HepG2 (cell line): ENCODE measurements at regions of chr20 and their contacts with region 1.

Region 1: GRCh38 chr20:23668477-23668951 is 20.3 kb downstream of the CST4 start:
- DNase-seq: peak; percentile 84
- ATAC-seq: peak; percentile 95
- H3K4me3 ChIP-seq: no peak overlapping the region
- H3K27ac ChIP-seq: no peak overlapping the region
- H3K4me1 ChIP-seq: peaks cover 22% of the 10 kb centered on the region
- H3K27me3 ChIP-seq: no peaks in the 10 kb centered on the region
- CTCF ChIP-seq: peak; percentile 99
- EP300 ChIP-seq: no peak
- POLR2A ChIP-seq: no peak
- RAD21 ChIP-seq: peak; percentile 94

Region 2: GRCh38 chr20:23721962-23722361 is 53.4 kb after region 1 on chr20:
- CTCF ChIA-PET with region 1: interaction called, 13 read pairs
- POLR2A ChIA-PET with region 1: no interaction called
- in situ Hi-C with region 1: no loop called
- intact Hi-C with region 1: loop called (anchors 5 kb)
- DNase-seq: no peak
- ATAC-seq: no peak
- H3K4me3 ChIP-seq: no peak overlapping the region
- H3K27ac ChIP-seq: no peak overlapping the region
- H3K4me1 ChIP-seq: no peaks in the 10 kb centered on the region
- H3K27me3 ChIP-seq: peaks cover 0 to 3% of the 10 kb centered on the region in 2 experiments; a peak in 2 of 5 replicates
- CTCF ChIP-seq: no peak
- EP300 ChIP-seq: no peak
- POLR2A ChIP-seq: no peak
- RAD21 ChIP-seq: no peak

Region 3: DNA sequence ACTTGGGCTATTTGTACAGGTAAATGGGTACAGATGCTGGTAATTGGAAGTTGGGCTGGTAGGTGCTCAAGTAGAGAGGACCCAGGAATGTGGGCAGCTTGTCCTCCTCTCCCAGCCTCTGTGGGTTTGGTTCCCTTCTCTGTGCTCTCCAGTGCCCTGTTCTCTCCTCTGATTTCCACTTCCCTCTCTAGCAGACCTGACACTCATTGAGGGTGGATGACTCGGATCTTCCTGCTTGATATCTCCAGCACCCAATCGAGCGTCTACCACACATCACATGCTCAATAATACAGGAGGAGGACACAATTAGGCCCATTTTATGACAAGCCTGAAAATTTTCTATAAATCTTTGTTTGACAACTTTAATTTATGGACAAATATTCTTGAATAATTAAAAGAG is 58.5 kb after region 1 on chr20:
- CTCF ChIA-PET with region 1: interaction called, 13 read pairs
- POLR2A ChIA-PET with region 1: no interaction called
- in situ Hi-C with region 1: no loop called
- intact Hi-C with region 1: loop called (anchors 5 kb)
- DNase-seq: no peak
- ATAC-seq: no peak
- H3K4me3 ChIP-seq: no peak overlapping the region
- H3K27ac ChIP-seq: no peak overlapping the region
- H3K4me1 ChIP-seq: no peaks in the 10 kb centered on the region
- H3K27me3 ChIP-seq: no peaks in the 10 kb centered on the region
- CTCF ChIP-seq: no peak
- EP300 ChIP-seq: no peak
- POLR2A ChIP-seq: no peak
- RAD21 ChIP-seq: no peak

Region 4: GRCh38 chr20:23782366-23782985 is 114.0 kb after region 1 on chr20:
- CTCF ChIA-PET with region 1: interaction called, 9 read pairs
- POLR2A ChIA-PET with region 1: no interaction called
- in situ Hi-C with region 1: no loop called
- intact Hi-C with region 1: loop called (anchors 5 kb)
- DNase-seq: no peak
- ATAC-seq: peak; percentile 99
- H3K4me3 ChIP-seq: no peak overlapping the region
- H3K27ac ChIP-seq: no peak overlapping the region
- H3K4me1 ChIP-seq: no peaks in the 10 kb centered on the region
- H3K27me3 ChIP-seq: no peaks in the 10 kb centered on the region
- CTCF ChIP-seq: peak; percentile 50; the same call in 1 of the 2 replicates
- EP300 ChIP-seq: no peak
- POLR2A ChIP-seq: no peak
- RAD21 ChIP-seq: no peak